ENCODE measurements at regions of chr7 and their contacts with region 1.

Region 1: DNA sequence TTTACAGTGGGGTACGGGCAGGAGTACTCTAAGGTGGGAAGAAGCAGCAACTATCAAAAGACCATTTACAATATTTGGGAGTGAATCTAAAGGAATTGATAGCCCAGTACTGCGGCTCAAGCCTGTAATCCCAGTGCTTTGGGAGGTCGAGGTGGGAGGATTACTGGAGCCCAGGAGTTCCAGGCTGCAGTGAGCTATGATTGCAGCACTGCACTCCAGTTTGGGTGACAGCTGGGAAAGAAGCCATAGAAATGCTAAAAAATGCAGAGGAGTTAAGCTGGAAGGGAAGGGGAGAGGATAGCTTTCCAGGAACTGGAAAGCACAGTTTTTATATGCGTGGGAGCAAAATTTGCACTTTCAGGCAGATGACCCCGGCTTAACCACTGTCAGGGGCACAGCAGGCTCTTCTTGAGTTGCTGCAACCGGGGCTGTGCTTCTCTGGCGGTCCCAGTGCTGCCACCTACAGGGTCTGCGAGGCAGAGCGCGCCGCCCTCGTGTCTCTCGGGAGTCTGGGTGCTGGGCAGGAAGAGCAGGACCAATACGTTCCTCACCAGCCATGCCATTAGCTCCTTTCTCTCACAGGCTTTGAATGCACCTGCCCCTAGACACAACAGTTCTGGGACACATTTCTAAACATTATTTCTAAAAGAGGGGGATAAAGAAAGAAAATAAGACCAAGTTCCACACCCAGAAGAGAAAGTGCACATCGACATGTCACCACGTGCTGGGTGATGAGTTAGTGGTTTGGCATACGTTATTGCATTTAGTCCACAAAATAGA is 10.1 kb upstream of the BMPER start:
- DNase-seq: peak; percentile 65
- CTCF ChIP-seq: peak; percentile 90

Region 2: GRCh38 chr7:33757562-33758165 is 137.6 kb before region 1 on chr7:
- CTCF ChIA-PET with region 1: interaction called, 11 read pairs
- POLR2A ChIA-PET with region 1: no interaction called
- DNase-seq: peak; percentile 19
- CTCF ChIP-seq: peak; percentile 41

Region 3: GRCh38 chr7:33789871-33790630 is 105.2 kb before region 1 on chr7:
- CTCF ChIA-PET with region 1: no interaction called
- POLR2A ChIA-PET with region 1: no interaction called
- DNase-seq: no peak
- CTCF ChIP-seq: no peak

Region 4: GRCh38 chr7:33882040-33882837 is 13.0 kb before region 1 on chr7:
- CTCF ChIA-PET with region 1: interaction called, 13 read pairs
- POLR2A ChIA-PET with region 1: no interaction called
- DNase-seq: no peak
- CTCF ChIP-seq: no peak